ENCODE measurements at regions of chr5 and their contacts with region 1.

Region 1: DNA sequence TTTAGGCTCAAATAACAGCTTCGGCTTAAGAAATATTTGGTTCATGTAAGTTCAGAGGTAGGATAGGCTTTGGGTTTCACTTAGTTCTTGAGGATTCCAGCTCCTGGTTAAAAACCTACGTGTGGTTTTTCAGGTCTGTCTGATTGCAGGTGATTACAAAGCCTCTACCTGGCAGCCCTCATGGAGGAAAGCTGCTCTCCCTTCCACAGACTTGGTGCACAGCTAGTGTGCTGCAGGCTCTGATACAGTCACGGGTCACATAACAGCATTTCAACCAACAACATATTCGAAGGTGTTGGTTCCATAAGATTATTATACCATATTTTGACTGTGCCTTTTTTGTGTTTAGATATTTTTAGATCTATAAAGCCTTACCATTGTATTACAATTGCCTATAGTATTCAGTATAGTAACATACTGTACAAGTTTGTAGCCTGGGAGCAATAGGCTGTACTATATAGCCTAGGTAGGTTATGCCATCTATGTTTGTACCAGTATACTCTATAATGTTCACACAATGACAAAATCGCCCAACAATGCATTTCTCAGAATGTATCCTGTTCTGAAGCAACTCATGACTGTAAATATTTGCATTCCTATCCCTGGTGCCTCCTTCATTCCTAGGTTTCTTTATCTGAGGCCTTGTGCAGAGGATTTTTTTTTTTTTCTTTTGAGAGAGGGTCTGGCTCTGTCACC is 8.0 kb upstream of the DCP2 start:
- DNase-seq: peak; percentile 68
- ATAC-seq: peak; percentile 71
- H3K4me3 ChIP-seq: no peak overlapping the region
- H3K27ac ChIP-seq: peak overlapping the region; percentile 80
- H3K4me1 ChIP-seq: peaks cover 14% of the 10 kb centered on the region
- H3K27me3 ChIP-seq: no peaks in the 10 kb centered on the region
- CTCF ChIP-seq: no peak
- POLR2A ChIP-seq: no peak
- RAD21 ChIP-seq: no peak

Region 2: DNA sequence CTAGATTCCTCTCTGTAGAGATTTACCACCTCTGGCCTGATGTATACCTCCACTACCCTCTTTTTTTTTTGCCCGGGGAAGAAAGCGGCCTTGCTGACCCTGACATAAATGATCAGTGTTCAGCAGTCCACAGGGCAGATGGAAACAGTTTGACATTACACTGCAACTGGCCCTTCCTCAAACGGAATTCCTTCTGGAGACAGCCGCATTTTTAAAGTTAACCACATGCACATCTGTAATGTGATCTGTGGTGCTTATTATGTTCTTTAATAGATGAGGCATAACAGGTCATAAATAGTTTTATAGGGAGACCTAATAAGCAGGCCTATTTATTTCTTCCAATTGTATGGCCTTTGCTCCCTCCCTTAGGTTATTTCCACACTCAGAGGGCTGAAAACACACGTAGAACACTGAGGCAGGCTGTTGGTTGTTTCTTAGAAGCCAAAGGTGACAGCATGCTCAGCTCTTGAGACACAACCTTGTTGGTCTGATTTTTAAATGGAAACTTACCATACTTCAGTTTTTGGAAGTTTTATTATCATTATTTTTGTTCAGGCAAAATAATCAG is 314.8 kb before region 1 on chr5:
- CTCF ChIA-PET with region 1: no interaction called
- POLR2A ChIA-PET with region 1: no interaction called
- dilution Hi-C with region 1: no loop called
- in situ Hi-C with region 1: no loop called
- intact Hi-C with region 1: no loop called
- DNase-seq: no peak
- ATAC-seq: no peak
- H3K4me3 ChIP-seq: no peak overlapping the region
- H3K27ac ChIP-seq: no peak overlapping the region
- H3K4me1 ChIP-seq: no peaks in the 10 kb centered on the region
- H3K27me3 ChIP-seq: no peaks in the 10 kb centered on the region; the same call in none of the 2 replicates
- CTCF ChIP-seq: no peak
- POLR2A ChIP-seq: no peak
- RAD21 ChIP-seq: no peak

Region 3: DNA sequence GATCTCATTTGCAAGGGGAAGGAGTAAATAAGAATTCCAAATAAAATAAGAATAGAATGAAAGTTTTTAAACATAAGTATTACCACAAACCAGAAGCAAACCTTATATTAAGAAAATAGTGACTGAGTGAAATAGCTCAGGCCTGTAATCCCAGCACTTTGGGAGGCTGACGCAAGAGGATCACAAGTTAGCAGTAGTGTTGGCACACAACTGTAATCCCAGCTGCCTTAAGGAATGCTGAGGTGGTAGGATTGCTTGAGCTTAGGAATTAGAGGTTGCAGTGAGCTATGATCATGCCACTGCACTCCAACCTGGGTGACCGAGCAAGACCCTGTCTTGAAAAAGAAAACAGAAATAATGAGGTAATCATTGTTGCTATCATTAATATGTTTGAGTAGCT is 183.8 kb before region 1 on chr5:
- CTCF ChIA-PET with region 1: no interaction called
- POLR2A ChIA-PET with region 1: no interaction called
- dilution Hi-C with region 1: no loop called
- in situ Hi-C with region 1: no loop called
- intact Hi-C with region 1: loop called (anchors 10 kb)
- DNase-seq: peak; percentile 55
- ATAC-seq: peak; percentile 24; the same call in 1 of the 2 replicates
- H3K4me3 ChIP-seq: no peak overlapping the region
- H3K27ac ChIP-seq: peak overlapping the region; percentile 21; the same call in 1 of the 2 replicates
- H3K4me1 ChIP-seq: peaks cover 4% of the 10 kb centered on the region
- H3K27me3 ChIP-seq: no peaks in the 10 kb centered on the region
- CTCF ChIP-seq: no peak
- POLR2A ChIP-seq: no peak
- RAD21 ChIP-seq: no peak

Region 4: DNA sequence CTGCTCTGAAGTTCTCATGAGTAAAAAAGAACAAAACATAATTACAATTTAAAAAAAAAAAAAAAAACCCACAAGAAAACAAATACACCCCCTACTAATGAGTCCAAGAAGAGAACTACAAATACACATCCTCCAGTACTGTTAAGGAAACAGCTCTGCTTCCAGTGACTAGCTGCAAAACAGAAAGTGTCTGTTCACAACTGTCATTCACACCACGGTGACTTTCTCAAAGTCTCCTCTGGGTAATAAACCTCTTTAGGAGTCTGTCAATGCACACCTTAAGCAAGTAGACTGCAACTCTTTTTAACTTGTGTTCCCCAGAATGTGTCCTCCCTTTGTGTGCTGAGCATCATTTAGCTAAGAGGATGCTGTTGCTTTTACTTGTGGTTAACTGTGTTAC is 52.7 kb before region 1 on chr5:
- CTCF ChIA-PET with region 1: interaction called, 5 read pairs
- POLR2A ChIA-PET with region 1: no interaction called
- dilution Hi-C with region 1: no loop called
- in situ Hi-C with region 1: no loop called
- intact Hi-C with region 1: loop called (anchors 2 kb)
- DNase-seq: no peak
- ATAC-seq: no peak
- H3K4me3 ChIP-seq: no peak overlapping the region
- H3K27ac ChIP-seq: no peak overlapping the region
- H3K4me1 ChIP-seq: peaks cover 9% of the 10 kb centered on the region
- H3K27me3 ChIP-seq: no peaks in the 10 kb centered on the region
- CTCF ChIP-seq: no peak
- POLR2A ChIP-seq: no peak
- RAD21 ChIP-seq: no peak